ENCODE measurements at regions of chr19 and their contacts with region 1.

Region 1: GRCh38 chr19:3572132-3572854 is 451 bp upstream of the HMG20B start:
- DNase-seq: peak; percentile 99
- H3K4me3 Mint-ChIP-seq: peak overlapping the region; percentile 83
- H3K27ac Mint-ChIP-seq: peak overlapping the region; percentile 81
- H3K4me1 Mint-ChIP-seq: peaks cover 11% of the 10 kb centered on the region
- H3K27me3 Mint-ChIP-seq: no peaks in the 10 kb centered on the region

Region 2: GRCh38 chr19:3505598-3506383 is 66.5 kb before region 1 on chr19 and contains the start of gene FZR1:
- intact Hi-C with region 1: no loop called
- DNase-seq: peak; percentile 100
- H3K4me3 Mint-ChIP-seq: peak within 1 kb of the TSS; percentile 97
- H3K27ac Mint-ChIP-seq: peak within 1 kb of the TSS; percentile 91
- H3K4me1 Mint-ChIP-seq: peaks cover 32% of the 10 kb centered on the region
- H3K27me3 Mint-ChIP-seq: peaks cover under 1% of the 10 kb centered on the region
- total RNA-seq, gene FZR1: 37.3 and 38.7 TPM in 2 replicates

Region 3: DNA sequence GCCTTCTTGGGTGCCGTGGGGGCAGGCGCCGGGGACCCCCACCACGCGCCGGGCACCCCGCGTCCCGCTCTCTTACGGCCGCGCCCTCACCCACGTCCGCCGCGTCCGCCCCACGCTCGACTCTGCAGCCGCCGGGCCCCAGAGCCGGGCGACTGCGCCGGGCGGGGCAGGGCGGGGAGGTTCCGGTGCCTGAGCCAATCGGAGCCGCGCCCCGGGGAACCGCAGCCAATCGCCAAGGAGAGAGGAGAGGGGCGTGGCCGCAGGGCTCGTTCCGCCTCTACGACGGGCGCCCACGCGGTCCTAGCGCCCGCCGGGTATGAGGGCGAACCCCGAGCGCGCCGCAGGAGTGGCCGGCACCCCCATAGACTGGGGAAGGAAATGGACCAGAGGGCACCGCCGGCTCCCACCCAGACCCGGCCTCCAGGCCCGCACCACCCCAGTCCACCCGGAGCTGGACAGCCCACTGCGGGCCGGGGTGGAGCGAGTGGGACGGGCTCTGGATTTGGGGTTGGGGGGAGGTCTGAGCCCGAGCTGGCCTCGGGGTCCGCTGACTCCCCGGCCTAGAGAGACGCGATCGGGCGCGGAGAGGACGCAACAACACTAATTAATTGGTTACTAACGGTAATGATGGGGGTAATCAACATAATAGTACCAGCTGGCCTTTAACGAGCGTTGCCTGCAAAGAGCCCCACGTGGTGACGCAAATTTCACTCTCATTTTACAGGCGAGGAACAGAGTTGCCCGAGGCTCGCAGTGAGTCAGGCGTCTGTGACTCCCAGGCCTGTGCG is 14.6 kb before region 1 on chr19 and contains the start of gene MFSD12:
- intact Hi-C with region 1: loop called (anchors 1 kb)
- DNase-seq: peak; percentile 99
- H3K4me3 Mint-ChIP-seq: peak within 1 kb of the TSS; percentile 100
- H3K27ac Mint-ChIP-seq: peak within 1 kb of the TSS; percentile 95
- H3K4me1 Mint-ChIP-seq: peaks cover 33% of the 10 kb centered on the region
- H3K27me3 Mint-ChIP-seq: no peaks in the 10 kb centered on the region
- total RNA-seq, gene MFSD12: 119 and 124 TPM in 2 replicates

Region 4: GRCh38 chr19:3762501-3763459 is 190.5 kb after region 1 on chr19 and contains the start of gene MRPL54:
- intact Hi-C with region 1: loop called (anchors 2 kb)
- DNase-seq: peak; percentile 100
- H3K4me3 Mint-ChIP-seq: peak within 1 kb of the TSS; percentile 99
- H3K27ac Mint-ChIP-seq: peak within 1 kb of the TSS; percentile 100
- H3K4me1 Mint-ChIP-seq: peaks cover 32% of the 10 kb centered on the region
- H3K27me3 Mint-ChIP-seq: peaks cover 5% of the 10 kb centered on the region
- total RNA-seq, gene MRPL54: 91.4 and 96.6 TPM in 2 replicates

Measured in activated CD4-positive, alpha-beta T cell treated with anti-CD3 and anti-CD28 coated beads, Interleukin-2, amount 10 ng/mL, durations not matched to agents 24 days and 14 days (primary cell).